CD8-positive, alpha-beta memory T cell (primary cell): ENCODE measurements at regions of chr10 and their contacts with region 1.

Region 1: GRCh38 chr10:12068449-12069269 is at the start of gene DHTKD1:
- DNase-seq: peak; percentile 98 to 99 (median 98)
- H3K4me3 ChIP-seq: peak within 1 kb of the TSS; percentile 80
- H3K4me3 Mint-ChIP-seq: peak within 1 kb of the TSS; percentile 85 to 93 (median 89)
- H3K27ac ChIP-seq: peak within 1 kb of the TSS; percentile 75
- H3K27ac Mint-ChIP-seq: peak within 1 kb of the TSS; percentile 86 to 97 (median 94)
- H3K4me1 ChIP-seq: peaks cover 7% of the 10 kb centered on the region
- H3K4me1 Mint-ChIP-seq: peaks cover 14 to 22% (median 20%) of the 10 kb centered on the region in 3 donors
- H3K27me3 ChIP-seq: no peaks in the 10 kb centered on the region
- H3K27me3 Mint-ChIP-seq: peaks cover 0 to 4% of the 10 kb centered on the region in 2 donors
- total RNA-seq, gene DHTKD1: 11.1 to 13.9 TPM

Region 2: GRCh38 chr10:12042797-12043651 is 25.6 kb before region 1 on chr10 and contains the start of gene UPF2:
- CTCF ChIA-PET with region 1: interaction called, 10 read pairs
- POLR2A ChIA-PET with region 1: interaction called, 17 read pairs
- DNase-seq: peak; percentile 94 to 99 (median 97)
- H3K4me3 ChIP-seq: peak within 1 kb of the TSS; percentile 74
- H3K4me3 Mint-ChIP-seq: peak within 1 kb of the TSS; percentile 93 to 99 (median 98)
- H3K27ac ChIP-seq: peak within 1 kb of the TSS; percentile 99
- H3K27ac Mint-ChIP-seq: peak within 1 kb of the TSS; percentile 97 to 100 (median 100)
- H3K4me1 ChIP-seq: peaks cover 25% of the 10 kb centered on the region
- H3K4me1 Mint-ChIP-seq: peaks cover 28 to 49% (median 49%) of the 10 kb centered on the region in 3 donors
- H3K27me3 ChIP-seq: no peaks in the 10 kb centered on the region
- H3K27me3 Mint-ChIP-seq: peaks cover 7% of the 10 kb centered on the region in 2 donors
- total RNA-seq, gene UPF2: 39.8 to 42.4 TPM